Naive thymus-derived CD4-positive, alpha-beta T cell (primary cell): ENCODE measurements at regions of chr1 and their contacts with region 1.

Region 1: GRCh38 chr1:226121587-226122400 is 59.3 kb downstream of the H3-3A start:
- DNase-seq: peak; percentile 65 to 87 (median 77)
- ATAC-seq: peak; percentile 82
- H3K4me3 ChIP-seq: peak overlapping the region; percentile 28
- H3K4me3 Mint-ChIP-seq: peak overlapping the region; percentile 68 to 94 (median 82)
- H3K27ac ChIP-seq: peak overlapping the region; percentile 75
- H3K27ac Mint-ChIP-seq: peak overlapping the region in 4 of 9 donors; percentile 51 to 95 (median 77)
- H3K4me1 ChIP-seq: peaks cover 9 to 12% of the 10 kb centered on the region in 2 donors
- H3K4me1 Mint-ChIP-seq: peaks cover 15 to 40% (median 27%) of the 10 kb centered on the region in 7 donors
- H3K27me3 ChIP-seq: no peaks in the 10 kb centered on the region
- H3K27me3 Mint-ChIP-seq: peaks cover 0 to 10% (median 0%) of the 10 kb centered on the region in 5 donors

Region 2: DNA sequence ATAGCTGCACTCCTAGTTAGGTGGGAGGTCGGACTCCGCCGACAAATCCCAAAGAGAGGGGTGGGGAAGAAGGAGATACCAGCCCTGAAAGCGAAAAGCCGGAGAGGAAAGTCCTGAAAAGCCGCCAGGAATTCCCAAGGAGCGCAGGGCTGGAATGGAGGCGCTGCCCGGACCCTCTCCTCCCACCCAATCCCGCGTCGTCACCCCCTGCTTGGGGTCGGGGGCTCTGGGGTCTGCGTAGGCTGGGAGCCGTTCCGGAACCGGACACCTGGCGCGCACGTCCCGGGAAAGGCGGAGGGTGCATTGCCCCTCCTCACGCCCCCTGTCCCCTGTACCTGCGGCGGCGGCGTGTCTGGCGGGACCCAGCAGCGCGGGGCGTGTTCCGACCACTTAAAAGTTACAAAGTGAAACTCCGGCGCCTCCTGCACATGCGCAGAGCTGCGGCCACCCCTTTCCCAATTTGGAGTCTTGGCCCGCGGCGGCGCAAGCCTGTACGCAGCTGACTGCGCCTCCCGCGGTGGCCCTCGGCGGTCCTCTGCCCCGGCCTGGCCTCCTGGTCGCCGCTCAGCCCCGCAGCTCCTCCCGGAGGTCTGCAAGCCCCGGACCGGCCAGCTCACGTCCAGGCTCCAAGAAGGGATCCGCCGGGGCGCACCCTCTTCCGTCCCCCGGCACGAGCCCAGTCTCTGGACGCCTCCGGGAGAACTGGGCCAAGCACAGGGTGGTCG is 239.7 kb before region 1 on chr1 and contains the start of gene TMEM63A:
- CTCF ChIA-PET with region 1: no interaction called
- POLR2A ChIA-PET with region 1: no interaction called
- intact Hi-C with region 1: loop called in 1 of 2 experiments (anchors 5 kb)
- DNase-seq: peak; percentile 83 to 89 (median 87)
- ATAC-seq: peak; percentile 84
- H3K4me3 ChIP-seq: peak within 1 kb of the TSS; percentile 80
- H3K4me3 Mint-ChIP-seq: peak within 1 kb of the TSS; percentile 89 to 99 (median 97)
- H3K27ac ChIP-seq: peak within 1 kb of the TSS; percentile 90
- H3K27ac Mint-ChIP-seq: peak within 1 kb of the TSS; percentile 91 to 98 (median 96)
- H3K4me1 ChIP-seq: peaks cover 41% of the 10 kb centered on the region in 2 donors
- H3K4me1 Mint-ChIP-seq: peaks cover 37 to 50% (median 48%) of the 10 kb centered on the region in 7 donors
- H3K27me3 ChIP-seq: no peaks in the 10 kb centered on the region
- H3K27me3 Mint-ChIP-seq: peaks cover 0 to 21% (median 0%) of the 10 kb centered on the region in 5 donors
- total RNA-seq, gene TMEM63A: 189 to 611 (median 383) TPM

Region 3: GRCh38 chr1:226046240-226046639 is 75.6 kb before region 1 on chr1:
- CTCF ChIA-PET with region 1: no interaction called
- POLR2A ChIA-PET with region 1: no interaction called
- intact Hi-C with region 1: no loop called
- DNase-seq: no peak
- ATAC-seq: no peak
- H3K4me3 ChIP-seq: no peak overlapping the region
- H3K4me3 Mint-ChIP-seq: no peak overlapping the region
- H3K27ac ChIP-seq: no peak overlapping the region
- H3K27ac Mint-ChIP-seq: peak overlapping the region in 1 of 9 donors; percentile 20
- H3K4me1 ChIP-seq: peaks cover 0 to 2% of the 10 kb centered on the region in 2 donors
- H3K4me1 Mint-ChIP-seq: peaks cover 0 to 1% (median 0%) of the 10 kb centered on the region in 7 donors
- H3K27me3 ChIP-seq: no peaks in the 10 kb centered on the region
- H3K27me3 Mint-ChIP-seq: peaks cover 0 to 11% (median 0%) of the 10 kb centered on the region in 5 donors

Region 4: DNA sequence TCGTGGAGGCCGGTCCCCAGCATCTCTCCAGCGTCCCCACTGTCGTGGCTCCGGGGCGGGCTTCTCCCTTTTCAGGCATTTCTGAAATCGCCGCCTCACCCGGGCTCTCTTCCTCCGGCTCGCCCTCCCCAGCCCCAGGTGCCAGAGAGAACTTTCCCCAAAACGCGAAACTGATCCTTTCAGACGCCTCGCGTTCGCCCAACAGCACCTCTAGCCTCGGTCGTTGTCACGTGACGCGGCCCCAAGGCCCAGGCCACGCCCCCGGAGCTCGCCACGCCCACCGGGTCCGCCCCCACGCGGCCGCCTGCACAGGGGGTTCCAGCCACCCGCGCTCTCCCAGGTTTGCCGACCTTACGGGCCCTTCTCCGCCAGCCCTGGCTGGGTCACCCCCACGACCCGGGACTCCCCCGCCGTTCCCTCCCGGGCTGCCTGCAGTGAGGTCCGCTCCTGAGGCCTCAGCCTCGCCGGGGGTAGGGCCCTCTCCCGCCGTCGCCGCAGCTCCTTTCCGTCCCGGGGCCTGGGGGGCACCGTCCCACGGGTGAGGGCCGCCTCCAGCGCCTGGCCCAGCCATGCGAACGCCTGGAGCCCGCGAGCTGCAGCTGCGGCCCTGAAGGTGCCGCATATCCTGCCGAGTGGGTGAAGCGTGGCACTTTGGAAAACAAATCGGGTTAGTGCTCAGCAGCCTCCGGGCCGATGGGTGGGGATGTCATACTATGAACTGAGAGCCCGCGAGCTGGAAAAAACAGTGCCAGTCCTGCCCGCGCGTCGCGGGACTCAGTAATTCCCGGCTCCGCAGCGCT is 38.3 kb before region 1 on chr1:
- CTCF ChIA-PET with region 1: interaction called, 6 read pairs
- POLR2A ChIA-PET with region 1: interaction called, 10 read pairs
- intact Hi-C with region 1: loop called (anchors 1 kb)
- DNase-seq: peak; percentile 79 to 98 (median 87)
- ATAC-seq: peak; percentile 98
- H3K4me3 ChIP-seq: peak overlapping the region; percentile 77
- H3K4me3 Mint-ChIP-seq: peak overlapping the region; percentile 78 to 94 (median 91)
- H3K27ac ChIP-seq: peak overlapping the region; percentile 65
- H3K27ac Mint-ChIP-seq: peak overlapping the region; percentile 25 to 93 (median 75)
- H3K4me1 ChIP-seq: peaks cover 5 to 8% of the 10 kb centered on the region in 2 donors
- H3K4me1 Mint-ChIP-seq: peaks cover 5 to 12% (median 8%) of the 10 kb centered on the region in 7 donors
- H3K27me3 ChIP-seq: no peaks in the 10 kb centered on the region
- H3K27me3 Mint-ChIP-seq: peaks cover 0 to 10% (median 0%) of the 10 kb centered on the region in 5 donors

Region 5: GRCh38 chr1:226195144-226195543 is 73.3 kb after region 1 on chr1:
- CTCF ChIA-PET with region 1: interaction called, 89 read pairs
- POLR2A ChIA-PET with region 1: interaction called, 4 read pairs
- intact Hi-C with region 1: loop called (anchors 1 kb)
- DNase-seq: no peak
- ATAC-seq: no peak
- H3K4me3 ChIP-seq: no peak overlapping the region
- H3K4me3 Mint-ChIP-seq: no peak overlapping the region
- H3K27ac ChIP-seq: no peak overlapping the region
- H3K27ac Mint-ChIP-seq: peak overlapping the region in 1 of 9 donors; percentile 52
- H3K4me1 ChIP-seq: no peaks in the 10 kb centered on the region
- H3K4me1 Mint-ChIP-seq: peaks cover 0 to 5% (median 0%) of the 10 kb centered on the region in 7 donors
- H3K27me3 ChIP-seq: no peaks in the 10 kb centered on the region
- H3K27me3 Mint-ChIP-seq: peaks cover 0 to 10% (median 0%) of the 10 kb centered on the region in 5 donors

Region 6: DNA sequence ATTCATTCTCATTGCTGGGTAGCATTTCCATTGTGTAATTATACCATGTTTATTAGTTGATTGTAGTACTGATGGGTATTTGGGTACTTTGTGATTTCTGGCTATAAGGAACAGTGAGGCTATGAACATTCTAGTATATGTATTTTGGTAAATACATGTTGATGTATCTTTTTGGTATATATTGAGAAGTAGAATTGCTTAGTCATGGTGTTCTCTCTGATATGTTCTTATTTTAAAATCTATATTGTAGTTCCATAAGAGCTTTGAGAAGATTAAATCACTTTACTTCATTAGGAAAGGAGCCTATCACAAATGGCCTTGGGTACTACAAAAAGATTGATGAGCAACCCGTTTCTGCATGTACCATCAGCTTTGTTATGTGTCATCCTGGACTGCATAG is 115.0 kb after region 1 on chr1:
- CTCF ChIA-PET with region 1: no interaction called
- POLR2A ChIA-PET with region 1: no interaction called
- intact Hi-C with region 1: no loop called
- DNase-seq: no peak
- ATAC-seq: no peak
- H3K4me3 ChIP-seq: no peak overlapping the region
- H3K4me3 Mint-ChIP-seq: no peak overlapping the region
- H3K27ac ChIP-seq: no peak overlapping the region
- H3K27ac Mint-ChIP-seq: no peak overlapping the region
- H3K4me1 ChIP-seq: no peaks in the 10 kb centered on the region
- H3K4me1 Mint-ChIP-seq: peaks cover 0 to 2% (median 0%) of the 10 kb centered on the region in 7 donors
- H3K27me3 ChIP-seq: no peaks in the 10 kb centered on the region
- H3K27me3 Mint-ChIP-seq: no peaks in the 10 kb centered on the region

Region 7: GRCh38 chr1:226332947-226333346 is 211.2 kb after region 1 on chr1:
- CTCF ChIA-PET with region 1: interaction called, 35 read pairs
- POLR2A ChIA-PET with region 1: interaction called, 3 read pairs
- intact Hi-C with region 1: loop called (anchors 1 kb)
- DNase-seq: no peak
- ATAC-seq: no peak
- H3K4me3 ChIP-seq: peak overlapping the region; percentile 13
- H3K4me3 Mint-ChIP-seq: peak overlapping the region in 8 of 10 donors; percentile 26 to 74 (median 68)
- H3K27ac ChIP-seq: no peak overlapping the region
- H3K27ac Mint-ChIP-seq: peak overlapping the region in 2 of 9 donors; percentile 25 to 43
- H3K4me1 ChIP-seq: peaks cover 4% of the 10 kb centered on the region in 2 donors
- H3K4me1 Mint-ChIP-seq: peaks cover 0 to 11% (median 6%) of the 10 kb centered on the region in 7 donors
- H3K27me3 ChIP-seq: no peaks in the 10 kb centered on the region
- H3K27me3 Mint-ChIP-seq: peaks cover 0 to 2% (median 0%) of the 10 kb centered on the region in 5 donors

Region 8: DNA sequence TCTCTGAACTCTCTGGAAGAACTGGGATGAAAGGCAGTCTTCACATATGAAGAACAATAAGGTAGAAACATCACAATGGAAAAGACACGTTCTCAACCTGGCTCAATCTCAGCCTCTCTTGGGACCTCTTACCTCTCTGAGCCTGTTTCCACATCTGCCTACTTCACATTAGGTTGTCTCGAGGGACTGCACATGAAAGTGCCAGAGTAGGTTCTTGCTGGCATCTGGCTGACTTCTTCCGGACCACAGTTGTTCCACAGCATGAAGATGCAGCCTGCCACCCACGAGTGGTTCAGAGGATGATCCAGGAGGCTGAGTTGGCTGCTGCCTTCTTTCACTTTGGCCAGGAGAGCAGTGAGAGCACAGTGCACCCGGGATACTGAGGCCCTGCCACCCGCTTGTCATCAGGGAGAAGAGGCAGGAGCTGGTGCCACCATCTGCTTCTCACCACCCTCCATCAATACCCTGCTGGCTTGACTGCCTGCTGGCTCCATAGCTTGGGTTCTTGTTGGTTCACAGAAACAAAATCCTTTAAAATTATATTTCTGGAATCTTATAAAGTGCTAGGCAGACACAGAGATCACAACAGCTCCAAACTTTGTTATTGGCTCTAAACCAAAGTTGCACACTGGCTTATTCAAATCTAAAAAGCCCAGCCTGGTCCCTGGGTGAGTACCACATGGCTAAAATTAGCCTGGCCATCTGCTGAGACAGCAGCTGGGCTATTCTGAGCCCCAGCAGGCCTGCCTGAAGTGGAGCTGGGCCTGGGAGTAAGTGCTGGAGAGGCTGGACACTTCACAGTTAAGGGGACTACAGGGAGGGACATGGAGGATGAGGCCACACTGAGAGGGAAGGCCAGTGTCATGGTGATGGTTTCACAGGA is 234.1 kb after region 1 on chr1:
- CTCF ChIA-PET with region 1: no interaction called
- POLR2A ChIA-PET with region 1: no interaction called
- intact Hi-C with region 1: no loop called
- DNase-seq: no peak
- ATAC-seq: no peak
- H3K4me3 ChIP-seq: no peak overlapping the region
- H3K4me3 Mint-ChIP-seq: no peak overlapping the region
- H3K27ac ChIP-seq: no peak overlapping the region
- H3K27ac Mint-ChIP-seq: no peak overlapping the region
- H3K4me1 ChIP-seq: no peaks in the 10 kb centered on the region
- H3K4me1 Mint-ChIP-seq: no peaks in the 10 kb centered on the region
- H3K27me3 ChIP-seq: no peaks in the 10 kb centered on the region
- H3K27me3 Mint-ChIP-seq: no peaks in the 10 kb centered on the region

Region 9: DNA sequence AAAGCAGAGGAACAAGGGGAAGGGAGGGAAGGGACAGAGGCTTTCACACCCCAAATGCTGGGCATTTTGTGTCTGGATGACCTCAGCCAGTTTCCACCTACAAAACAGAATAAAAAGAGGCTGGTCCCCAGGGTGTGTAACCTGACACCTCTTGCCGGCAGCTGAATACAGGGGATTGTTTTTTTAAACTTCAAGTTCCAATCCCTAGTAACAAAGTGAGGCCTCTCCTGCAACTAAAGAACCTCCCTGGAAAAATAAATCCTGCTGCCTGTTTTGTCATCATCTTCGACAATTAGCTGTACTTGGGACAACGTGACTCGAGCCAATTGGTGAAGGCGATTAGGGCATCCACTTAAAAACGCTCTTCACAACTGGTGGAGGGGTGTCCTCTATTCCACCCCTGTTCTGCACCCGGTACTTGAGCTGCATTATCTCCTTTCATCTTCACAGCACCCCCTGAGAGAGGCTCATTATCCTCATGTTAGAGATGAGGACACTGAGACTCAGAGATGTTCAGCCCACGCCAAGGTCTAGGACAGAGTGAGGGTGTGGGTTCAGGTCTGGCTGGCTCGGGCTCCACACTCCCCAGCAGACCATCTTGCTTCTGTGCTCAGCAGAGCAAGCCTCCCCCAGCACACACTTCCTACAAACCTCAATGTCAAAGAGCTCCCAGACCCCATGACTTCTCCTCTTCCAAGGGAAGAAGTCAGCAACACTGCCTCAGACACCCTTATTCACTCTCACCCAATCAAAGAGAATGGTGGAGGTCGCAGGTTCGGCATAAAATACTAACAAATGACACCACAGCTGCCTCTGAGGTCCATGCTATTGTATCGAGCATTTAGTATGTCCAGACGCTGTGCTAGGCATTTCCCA is 602.1 kb after region 1 on chr1:
- CTCF ChIA-PET with region 1: no interaction called
- POLR2A ChIA-PET with region 1: no interaction called
- intact Hi-C with region 1: no loop called
- DNase-seq: peak in 5 of 9 donors; percentile 12 to 43 (median 25)
- ATAC-seq: peak; percentile 26
- H3K4me3 ChIP-seq: peak overlapping the region; percentile 51
- H3K4me3 Mint-ChIP-seq: peak overlapping the region; percentile 83 to 99 (median 92)
- H3K27ac ChIP-seq: peak overlapping the region; percentile 92
- H3K27ac Mint-ChIP-seq: peak overlapping the region; percentile 88 to 98 (median 94)
- H3K4me1 ChIP-seq: peaks cover 74 to 90% of the 10 kb centered on the region in 2 donors
- H3K4me1 Mint-ChIP-seq: peaks cover 77 to 99% (median 91%) of the 10 kb centered on the region in 7 donors
- H3K27me3 ChIP-seq: no peaks in the 10 kb centered on the region
- H3K27me3 Mint-ChIP-seq: no peaks in the 10 kb centered on the region

Region 10: DNA sequence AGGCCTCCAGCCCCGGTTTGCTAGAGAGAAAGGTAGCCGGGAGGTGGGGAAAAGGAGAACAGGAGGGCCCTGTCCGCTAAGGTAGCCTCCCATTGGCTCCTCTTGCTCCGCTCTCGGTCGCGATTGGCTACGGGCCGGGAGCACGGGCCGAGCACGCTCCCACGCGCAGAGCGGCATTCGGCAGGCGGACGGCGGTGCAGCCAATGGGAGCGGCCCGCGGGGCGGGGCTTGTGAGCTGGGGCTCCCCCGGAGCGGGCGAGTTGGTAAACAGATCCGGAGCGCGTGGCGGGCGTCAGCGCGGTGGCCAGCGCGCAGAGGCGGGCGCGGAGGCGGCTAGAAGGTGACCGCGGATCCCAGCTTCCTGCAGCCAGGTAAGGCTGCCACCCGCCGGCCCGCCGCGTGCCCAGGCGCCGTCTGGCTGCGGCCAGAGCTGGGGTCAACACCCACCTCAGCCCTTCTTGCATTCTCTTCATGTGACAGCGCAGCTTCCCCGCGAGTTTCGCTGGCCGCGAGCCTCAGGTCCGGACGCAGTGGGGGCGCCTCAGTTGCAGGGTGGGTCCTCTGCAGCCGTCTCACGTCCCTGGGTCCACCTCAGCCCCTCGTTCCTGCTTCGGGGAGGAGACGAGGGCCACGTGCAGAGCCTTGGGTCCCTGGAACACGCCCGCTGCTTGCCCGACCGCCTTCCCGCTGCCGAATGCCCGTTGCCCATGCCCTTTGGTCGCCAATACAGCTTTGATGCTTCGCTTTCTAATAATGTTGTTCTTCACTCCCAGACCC is 818.4 kb after region 1 on chr1 and contains the start of gene COQ8A:
- CTCF ChIA-PET with region 1: no interaction called
- POLR2A ChIA-PET with region 1: no interaction called
- intact Hi-C with region 1: loop called in 1 of 2 experiments (anchors 2 kb)
- DNase-seq: peak in 8 of 9 donors; percentile 99 to 100 (median 100)
- ATAC-seq: peak; percentile 95
- H3K4me3 ChIP-seq: peak within 1 kb of the TSS; percentile 84
- H3K4me3 Mint-ChIP-seq: peak within 1 kb of the TSS; percentile 85 to 94 (median 92)
- H3K27ac ChIP-seq: peak within 1 kb of the TSS; percentile 87
- H3K27ac Mint-ChIP-seq: peak within 1 kb of the TSS; percentile 94 to 98 (median 97)
- H3K4me1 ChIP-seq: peaks cover 15 to 34% of the 10 kb centered on the region in 2 donors
- H3K4me1 Mint-ChIP-seq: peaks cover 43 to 67% (median 50%) of the 10 kb centered on the region in 7 donors
- H3K27me3 ChIP-seq: no peaks in the 10 kb centered on the region
- H3K27me3 Mint-ChIP-seq: no peaks in the 10 kb centered on the region
- total RNA-seq, gene COQ8A: 34.1 to 83.4 (median 67.8) TPM